HepG2 (cell line): ENCODE measurements at regions of chr1 and their contacts with region 1.

Region 1: GRCh38 chr1:3219005-3219790 is 150.2 kb downstream of the PRDM16 start:
- DNase-seq: peak; percentile 89
- ATAC-seq: peak; percentile 79
- H3K4me3 ChIP-seq: peak overlapping the region; percentile 43 to 66 (median 45)
- H3K27ac ChIP-seq: peak overlapping the region; percentile 57
- H3K4me1 ChIP-seq: peaks cover 56% of the 10 kb centered on the region
- H3K27me3 ChIP-seq: peaks cover 0 to 2% of the 10 kb centered on the region in 2 experiments; a peak in 1 of 5 replicates
- CTCF ChIP-seq: 0 out of 2 replicates have a peak, but pooled peaks have one; percentile 21
- EP300 ChIP-seq: 0 out of 4 replicates have a peak, but pooled peaks of 1 of the 2 experiments have one; percentile 13
- POLR2A ChIP-seq: 0 out of 4 replicates have a peak, but pooled peaks of 1 of the 2 experiments have one; percentile 24
- RAD21 ChIP-seq: no peak

Region 2: GRCh38 chr1:3133686-3134085 is 85.5 kb before region 1 on chr1:
- CTCF ChIA-PET with region 1: no interaction called
- POLR2A ChIA-PET with region 1: no interaction called
- in situ Hi-C with region 1: no loop called
- intact Hi-C with region 1: no loop called
- DNase-seq: peak; percentile 31
- ATAC-seq: peak; percentile 16; the same call in 2 of the 3 replicates
- H3K4me3 ChIP-seq: peak overlapping the region in 1 of 3 experiments; percentile 25; a peak in 2 of 6 replicates
- H3K27ac ChIP-seq: peak overlapping the region; percentile 45
- H3K4me1 ChIP-seq: peaks cover 67% of the 10 kb centered on the region
- H3K27me3 ChIP-seq: peaks cover 0 to 6% of the 10 kb centered on the region in 2 experiments; a peak in 2 of 5 replicates
- CTCF ChIP-seq: no peak
- EP300 ChIP-seq: no peak
- POLR2A ChIP-seq: no peak
- RAD21 ChIP-seq: no peak

Region 3: DNA sequence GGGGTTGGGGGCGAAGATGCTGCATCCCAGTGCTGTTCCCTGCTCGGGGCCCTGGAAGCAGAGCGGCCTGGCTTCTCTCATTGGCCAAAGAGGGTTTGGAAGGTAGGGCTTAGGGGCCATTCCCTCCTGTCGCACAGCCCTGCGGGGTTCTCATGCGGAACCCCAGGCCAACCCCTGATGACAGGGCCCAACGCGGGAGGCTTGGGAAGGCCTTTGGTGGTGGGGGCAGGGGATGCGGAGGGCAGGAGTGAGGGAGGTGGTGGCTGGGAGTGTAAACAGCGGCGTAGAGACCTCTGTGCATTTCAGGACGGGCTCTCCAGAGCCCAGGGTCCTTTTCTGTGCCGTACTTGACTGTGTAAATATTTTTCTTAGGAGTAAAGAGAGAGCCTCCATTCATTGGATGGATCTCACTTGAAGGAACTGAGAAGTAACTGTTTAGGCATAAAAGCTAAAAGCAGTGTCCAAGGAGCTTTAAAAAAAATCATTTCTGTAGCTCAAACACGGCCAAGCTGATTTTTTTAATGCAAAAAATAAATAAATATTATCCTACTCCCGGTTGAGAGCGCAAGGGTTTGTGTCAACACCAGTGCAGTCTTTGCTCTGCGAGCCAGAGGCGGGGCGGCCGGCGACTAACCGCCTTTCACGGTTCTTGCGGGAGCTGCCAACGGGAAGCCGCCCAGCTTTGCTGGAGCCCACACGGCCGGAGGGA is 18.9 kb after region 1 on chr1:
- CTCF ChIA-PET with region 1: no interaction called
- POLR2A ChIA-PET with region 1: interaction called, 24 read pairs
- in situ Hi-C with region 1: no loop called
- intact Hi-C with region 1: no loop called
- DNase-seq: peak; percentile 80
- ATAC-seq: peak; percentile 86
- H3K4me3 ChIP-seq: peak overlapping the region; percentile 22 to 51 (median 42); a peak in 4 of 6 replicates
- H3K27ac ChIP-seq: peak overlapping the region; percentile 91
- H3K4me1 ChIP-seq: peaks cover 59% of the 10 kb centered on the region
- H3K27me3 ChIP-seq: no peaks in the 10 kb centered on the region
- CTCF ChIP-seq: no peak
- EP300 ChIP-seq: no peak
- POLR2A ChIP-seq: no peak; a peak in 1 of 4 replicates
- RAD21 ChIP-seq: no peak

Region 4: DNA sequence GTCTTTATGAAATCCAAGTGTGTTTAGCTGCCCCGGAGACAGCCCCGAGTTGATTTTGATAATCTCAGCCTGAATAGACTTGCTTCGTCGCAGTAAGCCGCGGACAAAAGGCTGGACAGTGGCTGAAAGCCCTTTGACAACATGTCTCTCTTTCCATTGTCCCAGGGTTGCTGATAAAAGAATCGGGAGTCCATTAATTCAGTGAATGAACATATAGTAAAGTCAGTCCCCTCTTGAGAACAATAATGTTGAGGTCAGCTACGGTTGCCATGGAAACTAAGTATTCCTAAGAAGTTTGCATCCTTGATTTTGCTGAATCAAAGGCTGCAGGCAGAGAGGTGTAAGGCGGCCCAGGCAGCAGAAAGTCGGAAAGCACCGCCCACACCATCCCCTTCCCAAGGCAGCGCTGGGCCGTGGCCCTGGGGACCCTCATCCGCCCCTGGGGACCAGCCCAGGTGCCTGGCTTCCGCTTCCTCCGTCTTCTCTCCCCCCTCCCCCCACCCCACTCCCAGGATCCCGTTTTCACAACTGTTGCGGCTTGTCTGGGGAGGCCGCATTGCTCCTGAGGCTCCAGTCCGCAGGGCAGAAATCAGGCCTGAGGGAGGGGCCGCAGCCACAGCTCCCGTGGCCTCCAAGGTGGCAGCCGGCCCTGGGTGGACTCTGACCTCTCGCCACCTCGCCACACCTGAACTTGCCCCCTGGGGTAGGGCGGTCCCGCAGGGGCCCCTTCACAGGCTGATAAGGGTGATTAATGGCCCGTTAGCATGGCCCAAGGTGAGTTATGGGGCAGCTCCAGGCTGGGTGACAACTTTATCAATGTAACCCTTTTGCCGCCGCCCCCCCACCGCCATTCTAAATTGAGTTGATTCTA is 30.7 kb after region 1 on chr1:
- CTCF ChIA-PET with region 1: no interaction called
- POLR2A ChIA-PET with region 1: interaction called, 26 read pairs
- in situ Hi-C with region 1: no loop called
- intact Hi-C with region 1: loop called (anchors 5 kb)
- DNase-seq: peak; percentile 39
- ATAC-seq: peak; percentile 69
- H3K4me3 ChIP-seq: peak overlapping the region; percentile 24 to 61 (median 43); a peak in 5 of 6 replicates
- H3K27ac ChIP-seq: peak overlapping the region; percentile 83
- H3K4me1 ChIP-seq: peaks cover 62% of the 10 kb centered on the region
- H3K27me3 ChIP-seq: no peaks in the 10 kb centered on the region
- CTCF ChIP-seq: no peak
- EP300 ChIP-seq: peak in 1 of 2 experiments; percentile 79; a peak in 1 of 4 replicates
- POLR2A ChIP-seq: no peak; a peak in 1 of 4 replicates
- RAD21 ChIP-seq: no peak

Region 5: DNA sequence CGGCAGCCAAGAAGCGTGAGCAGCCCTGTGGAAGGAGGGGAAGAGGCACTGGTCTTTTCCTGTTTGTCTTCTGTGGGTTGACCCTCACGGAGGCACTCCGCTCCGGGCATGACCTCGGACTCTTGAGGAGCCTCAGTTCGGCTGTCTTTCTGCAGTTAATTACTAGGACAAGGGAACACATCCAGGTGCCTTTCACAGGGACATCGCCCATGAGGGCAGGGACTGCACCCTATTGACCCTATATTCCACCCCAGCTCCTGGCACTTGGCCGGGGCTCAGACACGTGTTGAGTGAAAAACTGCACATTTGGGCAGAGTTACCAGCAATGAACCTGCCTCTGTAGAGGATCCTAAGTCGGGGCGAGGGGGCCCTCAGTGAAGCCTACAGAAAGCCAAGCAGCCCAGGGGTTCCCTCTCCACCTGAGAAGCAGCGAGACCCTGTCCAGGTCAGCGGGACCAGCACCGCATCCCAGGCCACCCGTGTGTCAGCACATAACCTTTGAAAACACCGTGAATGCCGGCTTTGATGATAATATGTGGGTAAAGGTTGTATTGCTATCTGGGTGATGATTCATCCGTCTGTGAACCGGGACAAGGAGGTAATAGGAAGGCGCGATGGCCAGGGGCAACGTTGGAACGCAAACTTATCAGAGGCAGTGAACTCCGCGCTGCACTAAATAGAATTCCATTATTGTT is 73.8 kb after region 1 on chr1:
- CTCF ChIA-PET with region 1: no interaction called
- POLR2A ChIA-PET with region 1: interaction called, 3 read pairs
- in situ Hi-C with region 1: no loop called
- intact Hi-C with region 1: loop called (anchors 2 kb)
- DNase-seq: peak; percentile 92
- ATAC-seq: peak; percentile 75
- H3K4me3 ChIP-seq: peak overlapping the region; percentile 24 to 63 (median 37); a peak in 5 of 6 replicates
- H3K27ac ChIP-seq: peak overlapping the region; percentile 68
- H3K4me1 ChIP-seq: peaks cover 80% of the 10 kb centered on the region
- H3K27me3 ChIP-seq: no peaks in the 10 kb centered on the region
- CTCF ChIP-seq: no peak
- EP300 ChIP-seq: peak in 1 of 2 experiments; percentile 89; a peak in 2 of 4 replicates
- POLR2A ChIP-seq: peak in 1 of 2 experiments; percentile 10; a peak in 1 of 4 replicates
- RAD21 ChIP-seq: no peak